B cell (primary cell): ENCODE measurements at regions of chr7 and their contacts with region 1.

Region 1: GRCh38 chr7:5494683-5495561 is 71.3 kb upstream of the TNRC18 start:
- DNase-seq: peak; percentile 86
- ATAC-seq: peak; percentile 89
- H3K4me3 ChIP-seq: peak overlapping the region in 4 of 5 experiments; percentile 38 to 59 (median 42)
- H3K4me3 Mint-ChIP-seq: peak overlapping the region; percentile 77
- H3K27ac ChIP-seq: peak overlapping the region; percentile 38 to 66
- H3K27ac Mint-ChIP-seq: peak overlapping the region; percentile 61
- H3K4me1 ChIP-seq: peaks cover 15 to 29% of the 10 kb centered on the region in 2 donors
- H3K4me1 Mint-ChIP-seq: peaks cover 23% of the 10 kb centered on the region
- H3K27me3 ChIP-seq: no peaks in the 10 kb centered on the region
- H3K27me3 Mint-ChIP-seq: no peaks in the 10 kb centered on the region
- CTCF ChIP-seq: peak; percentile 98

Region 2: GRCh38 chr7:5363729-5364128 is 131.2 kb before region 1 on chr7:
- CTCF ChIA-PET with region 1: interaction called, 28 read pairs
- POLR2A ChIA-PET with region 1: interaction called, 5 read pairs
- intact Hi-C with region 1: no loop called
- DNase-seq: no peak
- ATAC-seq: peak; percentile 25
- H3K4me3 ChIP-seq: no peak overlapping the region
- H3K4me3 Mint-ChIP-seq: no peak overlapping the region
- H3K27ac ChIP-seq: no peak overlapping the region
- H3K27ac Mint-ChIP-seq: peak overlapping the region; percentile 5
- H3K4me1 ChIP-seq: peaks cover 7 to 23% of the 10 kb centered on the region in 2 donors
- H3K4me1 Mint-ChIP-seq: peaks cover 18% of the 10 kb centered on the region
- H3K27me3 ChIP-seq: no peaks in the 10 kb centered on the region
- H3K27me3 Mint-ChIP-seq: no peaks in the 10 kb centered on the region
- CTCF ChIP-seq: no peak

Region 3: DNA sequence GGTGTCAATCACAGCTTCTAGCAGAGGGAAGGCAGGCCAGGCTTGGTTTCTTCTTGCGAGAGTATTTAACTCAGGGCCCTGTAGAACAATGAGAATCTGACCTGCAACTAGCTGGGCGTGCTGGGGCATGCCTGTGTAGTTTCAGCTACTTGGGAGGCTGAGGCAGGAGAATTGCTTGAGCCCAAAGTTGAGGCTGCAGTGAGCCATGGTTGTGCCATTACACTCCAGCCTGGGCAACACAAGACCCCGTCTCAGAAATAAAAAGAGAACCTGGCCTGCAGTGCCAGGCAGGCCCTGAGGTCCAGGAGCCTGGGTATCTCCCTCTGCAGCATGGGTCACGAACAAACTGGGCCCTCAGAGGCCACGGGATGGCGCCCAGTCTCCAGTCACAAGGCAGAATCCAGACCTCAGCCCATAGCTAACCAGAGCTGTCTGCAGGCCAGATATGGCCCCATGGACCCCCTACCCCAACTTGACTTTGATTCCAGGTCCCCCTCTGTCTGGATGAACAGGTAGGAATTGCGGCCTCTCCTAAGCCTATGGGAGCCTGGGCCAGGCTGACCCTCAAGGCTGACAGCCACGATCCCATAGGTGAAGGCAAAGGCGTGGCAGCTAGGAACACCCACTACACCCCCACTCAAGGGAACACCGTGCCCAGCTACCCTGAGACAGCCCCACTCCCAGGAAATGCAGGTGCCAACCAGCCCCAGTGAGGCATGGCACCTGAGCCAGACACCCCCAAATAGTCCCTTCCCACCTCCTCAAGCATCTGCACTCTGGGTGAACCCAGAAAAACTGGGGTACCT is 31.4 kb after region 1 on chr7:
- CTCF ChIA-PET with region 1: interaction called, 20 read pairs
- POLR2A ChIA-PET with region 1: interaction called, 4 read pairs
- intact Hi-C with region 1: loop called (anchors 2 kb)
- DNase-seq: peak; percentile 52
- ATAC-seq: no peak
- H3K4me3 ChIP-seq: peak overlapping the region in 1 of 5 experiments; percentile 82
- H3K4me3 Mint-ChIP-seq: peak overlapping the region; percentile 98
- H3K27ac ChIP-seq: peak overlapping the region; percentile 37 to 51
- H3K27ac Mint-ChIP-seq: peak overlapping the region; percentile 88
- H3K4me1 ChIP-seq: peaks cover 24 to 40% of the 10 kb centered on the region in 2 donors
- H3K4me1 Mint-ChIP-seq: peaks cover 56% of the 10 kb centered on the region
- H3K27me3 ChIP-seq: no peaks in the 10 kb centered on the region
- H3K27me3 Mint-ChIP-seq: no peaks in the 10 kb centered on the region
- CTCF ChIP-seq: no peak

Region 4: DNA sequence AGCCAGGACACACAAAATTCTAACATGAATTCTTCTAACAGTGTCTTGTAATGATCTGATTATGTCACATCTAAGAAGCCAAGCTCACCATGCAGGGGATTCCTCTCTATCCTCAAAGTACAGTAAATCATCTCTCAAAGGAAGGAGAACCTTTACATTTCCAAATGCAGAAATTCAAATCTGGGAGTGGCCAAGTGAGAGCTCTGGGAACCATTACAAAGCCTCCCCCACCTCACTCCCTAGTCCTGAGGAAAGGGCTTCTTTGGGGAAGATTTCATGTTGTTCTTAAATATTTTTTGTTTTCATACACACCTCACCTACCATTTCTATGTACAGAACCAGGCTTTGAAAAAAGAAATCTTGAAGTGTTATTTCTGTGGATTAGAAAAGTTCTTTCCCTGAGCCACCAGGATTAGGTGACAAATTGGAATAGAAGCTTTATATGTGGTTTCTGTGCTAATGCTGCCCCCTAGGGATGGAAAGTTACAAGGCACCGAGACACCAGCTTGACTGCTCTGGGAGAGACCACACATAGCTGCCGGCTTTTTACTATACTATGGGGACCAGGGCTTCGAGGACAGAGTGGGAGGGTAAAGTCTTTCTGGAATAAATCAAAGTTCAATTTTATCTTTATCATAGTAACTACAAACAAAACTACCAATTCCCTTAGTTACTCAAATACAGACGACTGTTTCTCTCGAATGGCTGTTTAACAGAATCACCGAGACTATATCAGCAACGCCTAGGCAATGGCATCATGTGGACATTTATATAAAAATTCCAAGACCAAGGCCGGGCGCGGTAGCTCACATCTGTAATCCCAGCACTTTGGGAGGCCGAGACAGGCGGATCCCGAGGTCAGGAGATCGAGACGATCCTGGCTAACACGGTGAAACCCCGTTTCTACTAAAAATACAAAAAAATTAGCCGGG is 170.4 kb after region 1 on chr7:
- CTCF ChIA-PET with region 1: interaction called, 144 read pairs
- POLR2A ChIA-PET with region 1: interaction called, 5 read pairs
- intact Hi-C with region 1: loop called (anchors 1 kb)
- DNase-seq: peak; percentile 78
- ATAC-seq: peak; percentile 52
- H3K4me3 ChIP-seq: no peak overlapping the region
- H3K4me3 Mint-ChIP-seq: no peak overlapping the region
- H3K27ac ChIP-seq: no peak overlapping the region
- H3K27ac Mint-ChIP-seq: no peak overlapping the region
- H3K4me1 ChIP-seq: peaks cover 19 to 28% of the 10 kb centered on the region in 2 donors
- H3K4me1 Mint-ChIP-seq: peaks cover 29% of the 10 kb centered on the region
- H3K27me3 ChIP-seq: no peaks in the 10 kb centered on the region
- H3K27me3 Mint-ChIP-seq: no peaks in the 10 kb centered on the region
- CTCF ChIP-seq: peak; percentile 85

Region 5: GRCh38 chr7:5694912-5695726 is 200.2 kb after region 1 on chr7:
- CTCF ChIA-PET with region 1: interaction called, 170 read pairs
- POLR2A ChIA-PET with region 1: no interaction called
- intact Hi-C with region 1: no loop called
- DNase-seq: peak; percentile 58
- ATAC-seq: peak; percentile 44
- H3K4me3 ChIP-seq: peak overlapping the region; percentile 39 to 56 (median 49)
- H3K4me3 Mint-ChIP-seq: peak overlapping the region; percentile 88
- H3K27ac ChIP-seq: peak overlapping the region; percentile 93 to 94
- H3K27ac Mint-ChIP-seq: peak overlapping the region; percentile 93
- H3K4me1 ChIP-seq: peaks cover 83 to 96% of the 10 kb centered on the region in 2 donors
- H3K4me1 Mint-ChIP-seq: peaks cover 94% of the 10 kb centered on the region
- H3K27me3 ChIP-seq: no peaks in the 10 kb centered on the region
- H3K27me3 Mint-ChIP-seq: no peaks in the 10 kb centered on the region
- CTCF ChIP-seq: no peak

Region 6: GRCh38 chr7:5822742-5823503 is 328.0 kb after region 1 on chr7:
- CTCF ChIA-PET with region 1: interaction called, 15 read pairs
- POLR2A ChIA-PET with region 1: no interaction called
- intact Hi-C with region 1: loop called (anchors 5 kb)
- DNase-seq: peak; percentile 95
- ATAC-seq: peak; percentile 99
- H3K4me3 ChIP-seq: peak overlapping the region; percentile 47 to 85 (median 81)
- H3K4me3 Mint-ChIP-seq: peak overlapping the region; percentile 91
- H3K27ac ChIP-seq: peak overlapping the region; percentile 78 to 85
- H3K27ac Mint-ChIP-seq: peak overlapping the region; percentile 93
- H3K4me1 ChIP-seq: peaks cover 0 to 19% of the 10 kb centered on the region in 2 donors
- H3K4me1 Mint-ChIP-seq: peaks cover 18% of the 10 kb centered on the region
- H3K27me3 ChIP-seq: no peaks in the 10 kb centered on the region
- H3K27me3 Mint-ChIP-seq: no peaks in the 10 kb centered on the region
- CTCF ChIP-seq: no peak